Colonic mucosa (tissue), 4 donors: ENCODE measurements at regions of chr5 and their contacts with region 1.

Region 1: DNA sequence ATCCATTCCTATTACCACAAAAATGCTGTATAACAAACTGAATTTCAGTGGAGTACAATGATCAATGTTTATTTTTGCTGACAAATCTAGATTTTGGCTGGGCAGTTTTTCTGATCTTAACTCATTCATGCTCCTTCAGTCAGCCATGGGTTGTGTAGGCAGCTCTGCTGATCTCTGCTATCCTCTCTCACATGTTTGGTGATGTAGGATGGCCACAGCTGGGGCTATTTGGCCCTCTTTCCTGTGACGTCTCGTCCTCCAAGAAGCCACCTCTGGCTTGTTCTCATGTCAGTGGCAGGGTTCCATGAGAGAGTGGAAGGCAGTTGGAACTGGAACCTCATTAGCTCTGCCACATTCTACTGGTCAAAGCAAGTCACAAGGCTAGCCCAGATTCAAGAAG is 8.9 kb downstream of the NLN start:
- DNase-seq: no peak
- H3K4me3 ChIP-seq: no peak overlapping the region
- H3K27ac ChIP-seq: no peak overlapping the region
- H3K4me1 ChIP-seq: no peaks in the 10 kb centered on the region
- H3K27me3 ChIP-seq: no peaks in the 10 kb centered on the region
- CTCF ChIP-seq: no peak

Region 2: GRCh38 chr5:65535529-65535987 is 195.4 kb before region 1 on chr5:
- intact Hi-C with region 1: no loop called
- DNase-seq: peak; percentile 31
- H3K4me3 ChIP-seq: no peak overlapping the region
- H3K27ac ChIP-seq: peak overlapping the region; percentile 18
- H3K4me1 ChIP-seq: no peaks in the 10 kb centered on the region
- H3K27me3 ChIP-seq: no peaks in the 10 kb centered on the region
- CTCF ChIP-seq: no peak

Region 3: GRCh38 chr5:65760504-65761275 is 29.8 kb after region 1 on chr5:
- intact Hi-C with region 1: no loop called
- DNase-seq: peak; percentile 26
- H3K4me3 ChIP-seq: no peak overlapping the region
- H3K27ac ChIP-seq: no peak overlapping the region
- H3K4me1 ChIP-seq: no peaks in the 10 kb centered on the region
- H3K27me3 ChIP-seq: no peaks in the 10 kb centered on the region
- CTCF ChIP-seq: no peak

Region 4: GRCh38 chr5:65938256-65938655 is 207.3 kb after region 1 on chr5:
- intact Hi-C with region 1: no loop called
- DNase-seq: no peak
- H3K4me3 ChIP-seq: no peak overlapping the region
- H3K27ac ChIP-seq: no peak overlapping the region
- H3K4me1 ChIP-seq: no peaks in the 10 kb centered on the region
- H3K27me3 ChIP-seq: no peaks in the 10 kb centered on the region
- CTCF ChIP-seq: no peak

Region 5: GRCh38 chr5:66080664-66081063 is 349.8 kb after region 1 on chr5:
- intact Hi-C with region 1: loop called (anchors 10 kb)
- DNase-seq: no peak
- H3K4me3 ChIP-seq: no peak overlapping the region
- H3K27ac ChIP-seq: no peak overlapping the region
- H3K4me1 ChIP-seq: no peaks in the 10 kb centered on the region
- H3K27me3 ChIP-seq: no peaks in the 10 kb centered on the region
- CTCF ChIP-seq: no peak